ENCODE measurements at regions of chr4 and their contacts with region 1.

Region 1: DNA sequence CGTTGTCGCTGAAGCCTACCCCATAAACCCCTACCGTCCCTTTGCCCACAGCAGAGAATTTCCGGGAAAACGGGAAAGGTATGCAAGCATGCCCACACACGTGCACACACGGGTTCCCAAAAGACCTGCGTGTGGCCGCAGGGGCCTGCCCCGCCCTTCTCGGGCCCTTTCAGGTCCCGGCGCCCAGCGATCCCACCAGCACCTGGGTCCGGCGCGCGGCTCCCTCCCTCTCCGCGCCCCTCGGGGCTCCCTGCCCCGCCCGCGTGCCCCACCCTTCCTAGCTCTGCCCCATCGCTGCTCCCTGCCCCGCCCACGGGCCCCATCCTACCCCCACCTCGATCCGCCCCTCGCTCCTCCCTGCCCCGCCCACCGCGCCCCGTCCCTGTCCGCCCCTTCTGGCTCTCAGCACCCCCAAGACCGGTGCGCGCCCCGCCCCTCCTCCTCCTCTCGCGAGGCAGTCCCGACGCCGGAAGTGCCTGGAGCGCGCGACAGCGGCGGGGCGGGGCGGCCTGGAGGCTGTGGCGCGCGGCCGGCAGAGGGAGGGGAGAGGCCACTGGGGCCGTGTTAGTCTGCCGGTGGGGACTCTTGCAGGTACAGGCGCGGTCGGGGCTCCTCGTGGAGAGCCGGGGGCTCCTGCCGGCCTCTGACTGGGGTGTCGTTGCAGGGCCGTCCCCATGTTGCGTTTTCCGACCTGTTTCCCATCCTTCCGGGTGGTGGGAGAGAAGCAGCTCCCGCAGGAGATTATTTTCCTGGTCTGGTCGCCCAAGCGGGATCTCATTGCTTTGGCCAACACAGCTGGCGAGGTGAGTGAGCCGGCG is at the start of gene ANAPC4:
- DNase-seq: peak; percentile 69
- ATAC-seq: peak; percentile 97
- H3K4me3 ChIP-seq: peak within 1 kb of the TSS; percentile 96
- H3K27ac ChIP-seq: peak within 1 kb of the TSS; percentile 55
- H3K4me1 ChIP-seq: no peaks in the 10 kb centered on the region
- H3K27me3 ChIP-seq: no peaks in the 10 kb centered on the region
- CTCF ChIP-seq: no peak
- EP300 ChIP-seq: no peak
- POLR2A ChIP-seq: peak; percentile 97
- RAD21 ChIP-seq: no peak
- polyA plus RNA-seq, gene ANAPC4: 16.3 to 17.0 TPM

Region 2: DNA sequence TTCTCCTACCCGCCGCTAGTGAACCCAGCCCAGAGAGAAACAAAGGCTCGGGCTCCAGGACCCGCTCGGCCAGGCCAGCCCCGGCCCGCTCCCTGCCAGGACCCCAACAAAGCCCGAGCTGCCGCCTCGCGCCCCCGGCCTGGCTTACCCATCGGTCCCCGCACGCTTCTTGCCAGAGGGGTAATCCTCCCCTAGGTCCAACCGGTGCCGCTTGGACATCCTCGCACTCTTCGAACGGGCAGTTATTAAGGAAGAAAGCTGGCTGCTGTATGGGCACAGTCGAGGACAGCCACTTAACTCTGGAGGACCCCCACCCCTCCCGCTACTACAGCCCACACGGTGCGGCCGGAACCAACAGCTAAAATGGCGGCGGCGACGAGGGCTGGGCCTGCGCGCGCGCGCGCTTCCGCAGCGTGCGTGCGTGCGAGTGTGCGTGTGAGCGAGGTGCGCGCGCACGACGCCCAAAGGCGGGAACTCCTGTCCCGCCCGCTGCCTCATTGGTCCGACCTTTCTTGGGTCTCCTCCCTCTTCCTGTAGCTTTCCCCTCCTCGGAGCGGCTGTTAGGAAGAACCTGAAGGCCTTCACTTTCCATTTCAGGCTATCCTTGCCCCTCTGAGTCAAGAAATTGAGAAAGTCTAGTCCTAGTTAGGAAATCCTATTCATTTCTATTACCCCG is 792.6 kb before region 1 on chr4 and contains the start of gene DHX15:
- CTCF ChIA-PET with region 1: no interaction called
- POLR2A ChIA-PET with region 1: no interaction called
- RAD21 ChIA-PET with region 1: no interaction called
- SMC1A ChIA-PET with region 1: no interaction called
- in situ Hi-C with region 1: no loop called
- intact Hi-C with region 1: loop called (anchors 5 kb)
- DNase-seq: peak; percentile 86
- ATAC-seq: peak; percentile 88
- H3K4me3 ChIP-seq: peak within 1 kb of the TSS; percentile 70
- H3K27ac ChIP-seq: peak within 1 kb of the TSS; percentile 89
- H3K4me1 ChIP-seq: peaks cover 12% of the 10 kb centered on the region
- H3K27me3 ChIP-seq: no peaks in the 10 kb centered on the region
- CTCF ChIP-seq: no peak
- EP300 ChIP-seq: no peak
- POLR2A ChIP-seq: peak; percentile 93
- RAD21 ChIP-seq: no peak
- polyA plus RNA-seq, gene DHX15: 177 to 181 TPM

Region 3: DNA sequence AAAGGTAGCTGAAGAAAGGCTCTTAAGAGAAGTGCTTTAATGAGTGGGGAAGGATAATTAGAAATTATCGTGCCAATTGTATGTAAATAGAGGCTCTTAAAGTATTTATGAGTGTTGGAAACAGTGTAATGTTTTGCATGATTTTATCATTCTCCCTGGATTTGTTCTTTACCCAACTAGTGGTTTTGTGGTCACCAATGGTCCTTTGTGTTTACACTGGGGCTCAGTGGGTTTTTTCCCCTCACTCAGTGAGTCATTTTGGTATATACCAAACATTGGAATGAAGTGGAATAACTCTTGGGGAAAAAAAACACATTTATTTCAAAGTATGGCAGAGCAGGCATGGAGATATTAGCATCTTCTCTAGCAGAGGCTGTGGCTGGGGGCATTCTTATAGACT is 325.4 kb before region 1 on chr4:
- CTCF ChIA-PET with region 1: no interaction called
- POLR2A ChIA-PET with region 1: no interaction called
- RAD21 ChIA-PET with region 1: no interaction called
- SMC1A ChIA-PET with region 1: no interaction called
- in situ Hi-C with region 1: no loop called
- intact Hi-C with region 1: no loop called
- DNase-seq: no peak
- ATAC-seq: no peak
- H3K4me3 ChIP-seq: no peak overlapping the region
- H3K27ac ChIP-seq: no peak overlapping the region
- H3K4me1 ChIP-seq: no peaks in the 10 kb centered on the region
- H3K27me3 ChIP-seq: no peaks in the 10 kb centered on the region
- CTCF ChIP-seq: no peak
- EP300 ChIP-seq: no peak
- POLR2A ChIP-seq: no peak
- RAD21 ChIP-seq: no peak

Region 4: DNA sequence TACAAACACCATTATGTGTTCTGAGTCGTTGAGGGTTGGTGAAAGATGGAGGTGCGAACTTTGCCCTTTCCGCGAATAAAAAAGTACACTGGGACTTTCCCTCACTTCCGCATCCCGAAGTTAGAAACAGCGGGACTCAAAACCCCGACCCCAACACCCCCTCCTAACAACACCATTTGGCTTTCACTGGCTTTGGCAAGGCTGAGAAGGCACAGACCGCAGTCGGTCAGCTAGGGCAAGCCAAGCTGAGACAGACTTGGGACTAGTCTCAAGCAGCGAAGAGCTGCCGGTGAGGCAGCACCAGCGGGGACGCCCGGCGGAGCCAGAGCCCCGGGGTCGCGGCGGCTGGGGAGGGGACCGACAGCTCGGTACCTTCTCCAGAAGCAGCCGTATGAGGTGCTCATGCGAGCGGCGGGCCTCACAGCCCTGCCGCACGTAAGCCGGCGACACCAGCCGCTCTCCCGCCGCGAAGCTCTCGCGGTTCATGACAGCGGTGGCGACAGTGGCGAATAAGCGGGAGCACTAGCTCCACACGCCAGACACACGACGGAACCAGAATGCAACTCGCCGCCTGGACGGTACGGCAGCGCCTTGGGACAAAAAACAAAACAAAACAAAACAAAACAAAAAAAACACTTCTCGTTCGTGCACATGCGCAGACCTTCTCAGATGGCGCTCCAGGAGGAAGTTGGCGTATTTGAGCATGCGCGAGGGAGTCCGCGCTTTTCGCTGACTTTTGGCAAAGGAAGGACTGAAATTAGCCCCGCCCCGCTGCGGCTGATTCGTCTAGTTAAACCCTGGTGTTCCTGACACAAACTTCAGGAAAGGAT is 216.9 kb before region 1 on chr4 and contains the start of gene SEPSECS:
- CTCF ChIA-PET with region 1: interaction called, 3 read pairs
- POLR2A ChIA-PET with region 1: no interaction called
- RAD21 ChIA-PET with region 1: interaction called, 3 read pairs
- SMC1A ChIA-PET with region 1: no interaction called
- in situ Hi-C with region 1: no loop called
- intact Hi-C with region 1: loop called (anchors 5 kb)
- DNase-seq: peak; percentile 96
- ATAC-seq: peak; percentile 90
- H3K4me3 ChIP-seq: peak within 1 kb of the TSS; percentile 94
- H3K27ac ChIP-seq: peak within 1 kb of the TSS; percentile 96
- H3K4me1 ChIP-seq: peaks cover 4% of the 10 kb centered on the region
- H3K27me3 ChIP-seq: no peaks in the 10 kb centered on the region
- CTCF ChIP-seq: no peak
- EP300 ChIP-seq: no peak
- POLR2A ChIP-seq: peak; percentile 96
- RAD21 ChIP-seq: no peak
- polyA plus RNA-seq, gene SEPSECS: 2.8 to 2.9 TPM

Region 5: GRCh38 chr4:25299480-25300188 is 77.3 kb before region 1 on chr4:
- CTCF ChIA-PET with region 1: no interaction called
- POLR2A ChIA-PET with region 1: no interaction called
- RAD21 ChIA-PET with region 1: no interaction called
- SMC1A ChIA-PET with region 1: no interaction called
- in situ Hi-C with region 1: no loop called
- intact Hi-C with region 1: no loop called
- DNase-seq: no peak
- ATAC-seq: no peak
- H3K4me3 ChIP-seq: no peak overlapping the region
- H3K27ac ChIP-seq: no peak overlapping the region
- H3K4me1 ChIP-seq: no peaks in the 10 kb centered on the region
- H3K27me3 ChIP-seq: no peaks in the 10 kb centered on the region
- CTCF ChIP-seq: no peak
- EP300 ChIP-seq: no peak
- POLR2A ChIP-seq: no peak
- RAD21 ChIP-seq: no peak

Region 6: DNA sequence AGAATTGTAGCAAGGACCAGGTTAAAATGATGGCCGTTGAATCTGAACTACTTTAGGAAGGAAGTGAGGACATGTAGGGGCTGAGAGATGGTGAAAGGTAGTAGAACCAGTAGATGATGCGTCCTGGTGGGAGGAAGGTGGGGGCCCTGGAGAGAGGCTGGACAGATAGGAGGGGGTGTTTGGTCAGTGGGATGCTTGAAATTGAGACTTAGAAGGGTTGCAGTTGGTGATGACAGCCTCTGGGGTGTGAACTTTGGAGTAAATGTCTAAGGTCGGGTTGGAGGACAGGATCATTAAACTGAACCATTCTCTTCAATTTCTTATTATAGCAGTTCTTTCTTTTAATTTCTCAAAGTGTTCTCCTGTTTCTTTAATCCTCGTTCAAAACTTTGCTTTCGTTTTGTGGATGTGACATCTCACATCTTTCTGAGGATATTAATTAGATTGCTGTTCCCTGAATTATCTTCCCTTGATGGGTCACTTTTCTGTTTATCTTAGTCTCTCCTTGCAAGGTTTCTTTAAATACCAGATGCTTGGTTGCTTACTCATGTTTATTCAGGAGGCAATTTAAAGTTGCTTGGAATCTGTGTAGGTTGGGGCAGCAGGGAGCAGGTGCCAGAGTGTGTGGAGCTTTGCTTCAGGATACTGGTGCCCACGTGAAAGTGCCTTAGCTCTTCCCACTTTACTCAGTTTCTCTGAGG is 23.9 kb after region 1 on chr4:
- CTCF ChIA-PET with region 1: no interaction called
- POLR2A ChIA-PET with region 1: no interaction called
- RAD21 ChIA-PET with region 1: no interaction called
- SMC1A ChIA-PET with region 1: no interaction called
- in situ Hi-C with region 1: no loop called
- intact Hi-C with region 1: no loop called
- DNase-seq: no peak
- ATAC-seq: no peak
- H3K4me3 ChIP-seq: no peak overlapping the region
- H3K27ac ChIP-seq: no peak overlapping the region
- H3K4me1 ChIP-seq: no peaks in the 10 kb centered on the region
- H3K27me3 ChIP-seq: no peaks in the 10 kb centered on the region
- CTCF ChIP-seq: no peak
- EP300 ChIP-seq: no peak
- POLR2A ChIP-seq: no peak
- RAD21 ChIP-seq: no peak